ENCODE measurements at regions of chr1 and their contacts with region 1.

Region 1: DNA sequence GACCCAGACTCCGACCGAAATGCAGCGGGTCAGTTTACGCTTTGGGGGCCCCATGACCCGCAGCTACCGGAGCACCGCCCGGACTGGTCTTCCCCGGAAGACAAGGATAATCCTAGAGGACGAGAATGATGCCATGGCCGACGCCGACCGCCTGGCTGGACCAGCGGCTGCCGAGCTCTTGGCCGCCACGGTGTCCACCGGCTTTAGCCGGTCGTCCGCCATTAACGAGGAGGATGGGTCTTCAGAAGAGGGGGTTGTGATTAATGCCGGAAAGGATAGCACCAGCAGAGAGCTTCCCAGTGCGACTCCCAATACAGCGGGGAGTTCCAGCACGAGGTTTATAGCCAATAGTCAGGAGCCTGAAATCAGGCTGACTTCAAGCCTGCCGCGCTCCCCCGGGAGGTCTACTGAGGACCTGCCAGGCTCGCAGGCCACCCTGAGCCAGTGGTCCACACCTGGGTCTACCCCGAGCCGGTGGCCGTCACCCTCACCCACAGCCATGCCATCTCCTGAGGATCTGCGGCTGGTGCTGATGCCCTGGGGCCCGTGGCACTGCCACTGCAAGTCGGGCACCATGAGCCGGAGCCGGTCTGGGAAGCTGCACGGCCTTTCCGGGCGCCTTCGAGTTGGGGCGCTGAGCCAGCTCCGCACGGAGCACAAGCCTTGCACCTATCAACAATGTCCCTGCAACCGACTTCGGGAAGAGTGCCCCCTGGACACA is 534 bp downstream of the C1orf56 start:
- DNase-seq: peak; percentile 53 to 95 (median 67)

Region 2: GRCh38 chr1:150979092-150980056 is 68.7 kb before region 1 on chr1:
- intact Hi-C with region 1: no loop called
- DNase-seq: peak; percentile 58 to 95 (median 86)

Region 3: GRCh38 chr1:151008190-151008860 is 39.8 kb before region 1 on chr1 and contains the start of gene PRUNE1:
- intact Hi-C with region 1: loop called (anchors 5 kb)
- DNase-seq: peak; percentile 94 to 99 (median 96)

Region 4: GRCh38 chr1:151070474-151071276 is 22.6 kb after region 1 on chr1 and contains the start of gene GABPB2:
- intact Hi-C with region 1: no loop called
- DNase-seq: peak; percentile 78 to 98 (median 88)

Region 5: GRCh38 chr1:151106894-151107293 is 58.8 kb after region 1 on chr1:
- intact Hi-C with region 1: no loop called
- DNase-seq: no peak